Mucosa of descending colon (tissue), 3 donors: ENCODE measurements at regions of chr2 and their contacts with region 1.

Region 1: DNA sequence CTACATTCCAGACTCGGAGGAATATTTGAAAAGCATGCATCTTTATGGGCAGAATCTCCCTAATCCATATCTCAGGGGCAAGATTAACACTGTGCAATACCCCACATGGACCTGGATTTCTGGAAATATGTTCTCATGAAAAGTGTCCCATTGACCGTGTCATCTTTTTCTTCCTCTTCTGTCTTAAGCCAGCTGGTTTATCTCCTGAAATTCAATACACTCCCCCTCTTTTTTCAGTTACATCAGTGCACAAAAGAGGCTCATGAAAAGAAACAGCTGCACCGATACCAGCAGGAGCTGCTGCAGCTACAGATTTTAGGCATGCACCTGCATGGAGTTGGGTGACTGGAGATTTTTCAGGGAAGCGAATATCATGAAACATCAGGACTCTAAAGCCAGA is 117.2 kb downstream of the SLC4A3 start:
- DNase-seq: no peak
- ATAC-seq: no peak
- H3K4me3 ChIP-seq: no peak overlapping the region
- H3K4me1 ChIP-seq: no peaks in the 10 kb centered on the region
- CTCF ChIP-seq: no peak

Region 2: GRCh38 chr2:219446081-219446521 is 298.5 kb before region 1 on chr2:
- intact Hi-C with region 1: no loop called
- DNase-seq: no peak
- ATAC-seq: no peak
- H3K4me3 ChIP-seq: no peak overlapping the region
- H3K4me1 ChIP-seq: peaks cover 7% of the 10 kb centered on the region
- CTCF ChIP-seq: no peak

Region 3: GRCh38 chr2:219514196-219514761 is 230.3 kb before region 1 on chr2 and contains the start of gene ASIC4:
- intact Hi-C with region 1: no loop called
- DNase-seq: peak in 1 of 3 donors; percentile 46
- ATAC-seq: peak; percentile 2
- H3K4me3 ChIP-seq: no peak within 1 kb of the TSS
- H3K4me1 ChIP-seq: peaks cover 12% of the 10 kb centered on the region
- CTCF ChIP-seq: no peak
- total RNA-seq, gene ASIC4: 0.09 TPM in 1 of 3 donors, not detected in the others

Region 4: GRCh38 chr2:219689676-219690628 is 54.6 kb before region 1 on chr2:
- intact Hi-C with region 1: no loop called
- DNase-seq: peak in 1 of 3 donors; percentile 76
- ATAC-seq: peak; percentile 53
- H3K4me3 ChIP-seq: no peak overlapping the region
- H3K4me1 ChIP-seq: no peaks in the 10 kb centered on the region
- CTCF ChIP-seq: peak; percentile 65

Region 5: DNA sequence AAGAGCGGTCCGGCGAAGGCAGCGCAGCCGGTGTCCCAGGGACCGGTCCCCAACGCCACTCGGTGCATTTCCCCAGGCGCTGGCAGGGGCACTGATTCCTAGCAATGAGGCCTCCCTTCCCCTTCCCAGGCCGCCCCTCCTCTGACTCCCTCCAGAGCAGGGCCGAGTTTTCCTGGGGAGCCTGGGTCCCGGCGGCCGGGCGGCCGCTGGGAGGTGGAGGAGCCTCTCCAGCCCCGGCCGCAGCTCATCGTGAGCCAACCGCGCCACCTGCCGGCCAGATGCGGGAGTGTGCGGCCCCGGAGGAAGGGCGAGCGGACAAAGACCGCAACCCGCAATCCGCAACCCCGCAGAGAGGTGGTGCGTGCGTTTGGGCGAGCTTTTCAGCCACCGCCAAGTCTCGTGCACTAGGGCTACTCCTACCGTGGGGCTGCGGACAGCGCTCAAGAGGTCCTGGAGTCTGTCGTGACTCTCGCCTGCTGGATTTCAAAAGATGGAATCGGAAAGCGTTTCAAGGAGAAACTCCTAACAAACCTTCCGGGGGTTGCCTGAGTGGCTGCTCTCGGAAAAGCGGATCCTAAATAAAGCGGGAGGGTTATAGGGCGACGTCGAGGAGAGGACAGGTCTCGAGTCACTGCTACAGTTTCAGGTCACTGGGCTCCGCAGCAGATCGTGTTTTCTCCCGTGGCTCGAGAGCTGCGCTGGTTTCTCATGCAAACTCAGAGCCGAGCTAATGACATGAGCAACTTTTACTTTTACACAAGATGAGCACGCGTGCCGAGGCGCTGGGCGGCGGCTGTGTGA is 1829.0 kb after region 1 on chr2:
- intact Hi-C with region 1: loop called in 1 of 2 experiments (anchors 10 kb)
- DNase-seq: peak; percentile 88 to 93 (median 92)
- ATAC-seq: peak; percentile 81
- H3K4me3 ChIP-seq: peak overlapping the region; percentile 48
- H3K4me1 ChIP-seq: peaks cover 15% of the 10 kb centered on the region
- CTCF ChIP-seq: peak; percentile 91